T-cell (primary cell): ENCODE measurements at regions of chrX and their contacts with region 1.

Region 1: GRCh38 chrX:133792198-133792953 is 193.0 kb downstream of the GPC3 start:
- DNase-seq: peak; percentile 4 to 73 (median 39)
- ATAC-seq: peak in 3 of 4 experiments; percentile 54 to 67 (median 60)
- H3K4me3 ChIP-seq: no peak overlapping the region
- H3K4me3 Mint-ChIP-seq: no peak overlapping the region
- H3K27ac ChIP-seq: no peak overlapping the region
- H3K27ac Mint-ChIP-seq: no peak overlapping the region
- H3K4me1 ChIP-seq: no peaks in the 10 kb centered on the region
- H3K4me1 Mint-ChIP-seq: no peaks in the 10 kb centered on the region
- H3K27me3 ChIP-seq: no peaks in the 10 kb centered on the region
- H3K27me3 Mint-ChIP-seq: peaks cover 0 to 25% of the 10 kb centered on the region in 2 donors

Region 2: DNA sequence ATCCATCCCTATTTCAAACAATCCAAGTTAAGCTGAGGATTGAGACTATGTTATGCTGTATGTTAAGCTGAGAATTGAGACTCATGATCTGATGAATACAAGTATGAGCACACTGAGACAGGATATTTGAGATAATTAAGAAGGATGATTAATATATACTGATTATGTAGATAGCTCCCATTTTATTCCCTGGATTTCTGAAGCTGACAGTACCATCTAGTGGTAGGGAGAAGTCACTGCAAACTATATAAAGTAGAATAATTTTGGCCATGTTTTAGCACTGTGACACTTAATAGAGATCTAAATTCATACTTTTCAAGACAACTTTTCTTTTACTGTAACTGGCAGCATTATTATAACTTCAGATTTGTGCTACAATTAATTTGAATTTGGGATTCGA is 603.8 kb after region 1 on chrX:
- CTCF ChIA-PET with region 1: interaction called, 17 to 33 read pairs
- POLR2A ChIA-PET with region 1: no interaction called
- DNase-seq: peak in 1 of 35 experiments; percentile 28
- ATAC-seq: no peak
- H3K4me3 ChIP-seq: no peak overlapping the region
- H3K4me3 Mint-ChIP-seq: no peak overlapping the region
- H3K27ac ChIP-seq: no peak overlapping the region
- H3K27ac Mint-ChIP-seq: no peak overlapping the region
- H3K4me1 ChIP-seq: no peaks in the 10 kb centered on the region
- H3K4me1 Mint-ChIP-seq: peaks cover 0 to 6% (median 0%) of the 10 kb centered on the region in 3 donors
- H3K27me3 ChIP-seq: no peaks in the 10 kb centered on the region
- H3K27me3 Mint-ChIP-seq: peaks cover 0 to 13% of the 10 kb centered on the region in 2 donors